ENCODE measurements at regions of chrX and their contacts with region 1.

Region 1: GRCh38 chrX:79259073-79259689 is 108.0 kb downstream of the ITM2A start:
- DNase-seq: peak; percentile 75
- ATAC-seq: peak; percentile 89
- H3K4me3 Mint-ChIP-seq: peak overlapping the region; percentile 65
- H3K27ac Mint-ChIP-seq: peak overlapping the region; percentile 92
- H3K4me1 Mint-ChIP-seq: peaks cover 81% of the 10 kb centered on the region
- H3K27me3 Mint-ChIP-seq: no peaks in the 10 kb centered on the region

Region 2: GRCh38 chrX:79153348-79153747 is 105.8 kb before region 1 on chrX:
- CTCF ChIA-PET with region 1: no interaction called
- POLR2A ChIA-PET with region 1: interaction called, 11 read pairs
- DNase-seq: no peak
- ATAC-seq: peak; percentile 45
- H3K4me3 Mint-ChIP-seq: peak overlapping the region; percentile 67
- H3K27ac Mint-ChIP-seq: peak overlapping the region; percentile 91
- H3K4me1 Mint-ChIP-seq: peaks cover 81% of the 10 kb centered on the region
- H3K27me3 Mint-ChIP-seq: no peaks in the 10 kb centered on the region

Measured in activated CD8-positive, alpha-beta T cell treated with anti-CD3 and anti-CD28 coated beads, Interleukin-2, amount 10 ng/mL, durations not matched to agents 7 days and 5 days (primary cell).